Activated naive CD4-positive, alpha-beta T cell treated with anti-CD3 and anti-CD28 coated beads for 36 hours (primary cell): ENCODE measurements at regions of chr2 and their contacts with region 1.

Region 1: DNA sequence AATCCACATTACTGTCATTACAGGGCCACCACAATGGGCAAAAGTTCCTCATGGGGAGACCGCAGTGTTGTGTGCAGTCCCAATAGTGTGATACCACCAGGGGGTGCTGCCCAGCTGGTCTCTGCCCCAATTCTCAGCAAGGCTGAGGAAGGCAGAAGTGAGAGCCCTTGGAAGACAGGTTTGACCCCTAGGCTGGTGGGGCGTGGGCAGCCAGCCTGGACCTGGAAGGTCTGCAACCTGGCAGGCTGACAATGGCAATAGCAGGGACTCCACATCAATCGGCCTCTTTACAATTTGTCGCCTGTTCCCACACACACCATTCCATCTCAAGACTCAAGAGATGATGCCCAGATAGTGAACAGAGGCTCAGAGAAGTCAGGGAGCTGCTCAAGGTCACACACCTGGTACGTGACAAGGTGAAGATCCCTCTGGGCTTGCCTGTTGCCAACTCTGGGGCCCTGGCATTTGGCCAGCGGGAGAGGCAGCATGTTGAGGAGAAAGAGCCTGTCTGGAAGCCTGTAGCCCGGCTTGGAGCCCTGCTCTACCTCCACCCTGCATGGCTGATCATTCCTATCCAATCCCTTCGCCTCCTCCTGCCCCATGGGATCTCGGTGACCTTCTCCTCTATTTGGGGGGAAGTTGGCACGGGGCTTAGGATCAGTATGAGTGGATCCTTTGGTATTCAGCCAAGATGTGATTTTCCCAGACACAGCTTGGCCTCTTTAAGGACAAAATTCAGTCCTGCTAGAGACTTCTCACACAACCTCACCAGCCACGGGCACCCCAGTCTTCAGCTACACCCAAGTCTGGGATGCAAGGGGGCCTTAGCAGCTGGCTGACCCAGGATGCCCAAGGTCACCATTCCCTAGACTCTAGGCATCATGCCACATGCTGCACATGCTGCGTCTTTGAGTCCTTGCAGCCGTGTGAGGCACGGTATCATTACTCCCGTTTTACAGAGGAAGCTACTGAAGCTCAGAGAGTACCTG is 2.9 kb upstream of the ATOH8 start:
- DNase-seq: peak; percentile 76
- H3K4me3 Mint-ChIP-seq: no peak overlapping the region
- H3K27ac Mint-ChIP-seq: no peak overlapping the region
- H3K4me1 Mint-ChIP-seq: peaks cover 14% of the 10 kb centered on the region
- H3K27me3 Mint-ChIP-seq: peaks cover 58% of the 10 kb centered on the region

Region 2: GRCh38 chr2:85728883-85729824 is 21.7 kb before region 1 on chr2:
- CTCF ChIA-PET with region 1: interaction called, 8 read pairs
- intact Hi-C with region 1: loop called (anchors 2 kb)
- DNase-seq: peak; percentile 81
- H3K4me3 Mint-ChIP-seq: no peak overlapping the region
- H3K27ac Mint-ChIP-seq: no peak overlapping the region
- H3K4me1 Mint-ChIP-seq: peaks cover 4% of the 10 kb centered on the region
- H3K27me3 Mint-ChIP-seq: peaks cover 2% of the 10 kb centered on the region

Region 3: GRCh38 chr2:85737481-85737880 is 13.4 kb before region 1 on chr2:
- CTCF ChIA-PET with region 1: interaction called, 12 read pairs
- intact Hi-C with region 1: no loop called
- DNase-seq: no peak
- H3K4me3 Mint-ChIP-seq: no peak overlapping the region
- H3K27ac Mint-ChIP-seq: no peak overlapping the region
- H3K4me1 Mint-ChIP-seq: no peaks in the 10 kb centered on the region
- H3K27me3 Mint-ChIP-seq: peaks cover 6% of the 10 kb centered on the region

Region 4: DNA sequence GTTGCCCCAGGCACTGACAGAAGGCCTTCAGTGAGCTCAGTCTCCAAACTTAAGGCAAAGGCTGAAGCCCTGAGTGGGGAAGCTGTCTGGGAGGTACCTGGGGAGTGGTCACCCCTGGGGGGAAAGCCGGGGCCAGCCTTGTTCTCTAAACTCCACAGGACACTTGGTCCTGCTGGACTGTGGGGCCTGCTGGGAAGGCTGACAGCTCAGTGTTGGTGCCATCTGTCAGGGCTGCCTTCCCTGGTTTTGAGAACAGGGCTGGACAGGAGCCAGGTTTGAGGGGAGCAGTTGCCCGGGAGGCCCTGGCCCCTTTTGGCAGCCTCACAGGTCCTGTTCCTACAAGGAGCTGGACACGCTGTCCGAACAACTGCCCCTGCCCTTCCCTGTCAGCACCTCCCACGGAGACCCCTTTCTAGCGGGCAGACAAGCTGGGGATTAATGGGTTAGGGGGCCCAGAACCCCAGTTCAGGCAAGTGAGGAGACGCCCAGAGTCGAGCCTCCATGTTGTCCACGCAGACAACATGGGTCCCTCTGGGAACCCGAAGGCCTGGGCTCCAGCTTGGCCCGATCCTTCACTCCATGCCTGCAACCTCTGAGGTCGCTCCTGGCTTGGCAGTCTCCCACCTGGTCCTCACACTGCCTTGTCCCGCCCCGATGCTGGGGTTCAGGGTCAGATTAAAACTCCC is 43.7 kb after region 1 on chr2:
- CTCF ChIA-PET with region 1: no interaction called
- intact Hi-C with region 1: no loop called
- DNase-seq: no peak
- H3K4me3 Mint-ChIP-seq: no peak overlapping the region
- H3K27ac Mint-ChIP-seq: no peak overlapping the region
- H3K4me1 Mint-ChIP-seq: no peaks in the 10 kb centered on the region
- H3K27me3 Mint-ChIP-seq: no peaks in the 10 kb centered on the region

Region 5: DNA sequence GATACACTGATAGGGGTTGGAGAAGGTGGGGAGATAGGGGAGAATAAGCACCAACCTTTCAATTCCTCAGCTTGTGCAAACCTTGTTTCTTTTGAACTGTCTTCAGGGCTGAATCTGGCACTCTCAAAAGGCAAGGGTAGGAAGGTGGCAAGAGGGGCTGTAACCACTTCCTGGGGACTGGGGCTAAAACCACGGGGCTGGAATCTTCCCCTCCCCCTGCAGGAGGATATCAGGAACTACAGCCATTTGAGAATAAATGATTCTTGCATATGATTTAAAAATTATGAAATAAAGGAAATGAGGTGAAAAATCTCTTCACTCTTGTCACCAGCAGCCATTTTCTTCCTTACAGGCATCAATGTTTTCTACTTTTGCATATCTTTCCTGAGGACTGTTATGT is 53.7 kb after region 1 on chr2:
- CTCF ChIA-PET with region 1: interaction called, 7 read pairs
- intact Hi-C with region 1: loop called (anchors 2 kb)
- DNase-seq: peak; percentile 42
- H3K4me3 Mint-ChIP-seq: no peak overlapping the region
- H3K27ac Mint-ChIP-seq: no peak overlapping the region
- H3K4me1 Mint-ChIP-seq: peaks cover 7% of the 10 kb centered on the region
- H3K27me3 Mint-ChIP-seq: no peaks in the 10 kb centered on the region

Region 6: DNA sequence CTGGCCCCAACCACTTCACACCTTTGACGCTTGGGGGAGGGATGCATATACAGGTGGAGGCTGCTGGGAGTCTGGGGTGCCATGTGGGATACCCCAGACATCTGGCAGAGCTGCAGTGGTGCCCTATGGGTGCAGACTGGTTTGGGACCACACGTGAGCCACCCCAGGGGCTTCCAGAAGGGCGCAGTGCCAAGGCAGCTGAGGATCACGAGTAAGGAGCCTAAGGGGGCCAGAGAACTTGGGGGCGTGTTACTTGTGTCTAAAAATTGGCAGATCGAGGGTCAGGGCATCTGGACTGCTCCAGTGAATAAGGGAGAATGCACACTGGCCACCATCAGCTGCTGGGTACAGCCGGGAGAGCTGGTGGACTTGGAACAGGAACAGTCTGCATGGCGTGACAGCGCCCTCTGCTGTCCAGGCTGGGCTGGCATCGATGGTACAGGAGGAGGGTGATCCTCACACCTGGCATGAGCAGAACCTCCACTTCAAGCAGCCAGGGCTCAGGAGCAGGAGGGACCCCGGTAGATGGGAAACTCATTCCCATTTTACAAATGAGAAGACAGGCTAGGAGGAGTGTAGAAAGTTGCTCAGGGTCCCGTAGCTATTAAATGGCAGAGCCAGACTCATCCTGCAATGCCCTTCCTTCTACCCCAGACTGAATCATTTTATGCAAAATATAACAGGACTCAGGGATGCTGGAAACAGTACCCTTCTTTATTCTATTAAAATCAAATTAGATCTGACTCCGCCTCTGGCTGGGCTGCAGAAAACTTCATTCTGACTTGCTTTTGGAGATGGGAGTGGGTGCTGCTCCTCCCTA is 63.3 kb after region 1 on chr2:
- CTCF ChIA-PET with region 1: interaction called, 41 read pairs
- intact Hi-C with region 1: loop called (anchors 1 kb)
- DNase-seq: peak; percentile 92
- H3K4me3 Mint-ChIP-seq: no peak overlapping the region
- H3K27ac Mint-ChIP-seq: no peak overlapping the region
- H3K4me1 Mint-ChIP-seq: no peaks in the 10 kb centered on the region
- H3K27me3 Mint-ChIP-seq: peaks cover 1% of the 10 kb centered on the region

Region 7: DNA sequence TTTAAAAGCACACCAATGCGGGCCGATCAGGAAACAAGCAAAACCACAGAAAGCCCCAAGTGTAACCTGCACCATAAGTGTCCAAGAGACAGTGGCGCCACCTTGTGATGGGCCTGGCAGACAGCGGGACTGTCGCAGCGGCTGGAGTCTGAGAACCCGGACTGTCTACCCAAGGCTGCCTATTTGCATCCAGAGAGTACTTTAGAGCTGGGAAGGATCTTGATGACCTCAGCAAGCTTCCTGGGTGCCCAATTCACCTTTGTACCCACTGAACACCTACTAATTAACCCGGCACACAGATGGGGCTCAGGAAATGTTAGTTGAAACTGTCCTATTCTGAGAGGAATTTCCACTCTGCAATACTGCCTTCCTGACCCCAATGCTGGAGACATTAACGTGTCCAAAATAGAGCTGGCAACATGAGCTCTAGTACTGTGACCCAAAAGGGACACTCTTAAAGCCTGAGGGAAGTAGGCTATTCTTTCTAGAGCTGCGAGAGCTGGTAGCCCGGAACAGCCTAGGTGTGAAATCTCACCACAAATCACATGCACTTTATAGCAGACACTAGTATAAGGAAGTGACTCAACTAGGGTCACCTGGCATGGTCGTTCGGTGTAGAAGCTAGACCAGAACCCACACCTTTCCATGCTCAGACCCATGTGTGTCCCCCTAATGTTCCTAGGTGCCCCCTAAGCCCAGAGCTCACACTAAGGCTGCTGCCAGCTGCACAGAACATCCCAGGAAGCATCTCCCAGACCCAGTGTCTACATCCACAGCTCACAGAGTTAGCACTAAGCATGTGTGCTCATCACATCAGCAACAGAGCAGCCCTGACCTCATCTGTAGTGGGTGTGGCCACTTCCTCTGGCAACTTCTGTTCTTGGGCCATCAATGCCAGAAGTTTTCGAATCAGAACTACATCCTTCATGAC is 329.4 kb after region 1 on chr2:
- CTCF ChIA-PET with region 1: interaction called, 3 read pairs
- intact Hi-C with region 1: loop called (anchors 5 kb)
- DNase-seq: peak; percentile 91
- H3K4me3 Mint-ChIP-seq: no peak overlapping the region
- H3K27ac Mint-ChIP-seq: no peak overlapping the region
- H3K4me1 Mint-ChIP-seq: peaks cover 16% of the 10 kb centered on the region
- H3K27me3 Mint-ChIP-seq: no peaks in the 10 kb centered on the region